Ascending aorta (tissue), 2 donors: ENCODE measurements at regions of chr3 and their contacts with region 1.

Region 1: GRCh38 chr3:121545574-121546455 is at the start of gene POLQ:
- DNase-seq: peak; percentile 65 to 93
- H3K4me3 ChIP-seq: peak within 1 kb of the TSS; percentile 55 to 66
- H3K27ac ChIP-seq: peak within 1 kb of the TSS; percentile 43 to 58
- H3K4me1 ChIP-seq: peaks cover 3 to 5% of the 10 kb centered on the region in 2 donors
- H3K27me3 ChIP-seq: no peaks in the 10 kb centered on the region
- CTCF ChIP-seq: no peak
- total RNA-seq, gene POLQ: not detected

Region 2: GRCh38 chr3:121648219-121648958 is 102.6 kb after region 1 on chr3:
- intact Hi-C with region 1: loop called (anchors 5 kb)
- DNase-seq: no peak
- H3K4me3 ChIP-seq: no peak overlapping the region
- H3K27ac ChIP-seq: peak overlapping the region in 1 of 2 donors; percentile 34
- H3K4me1 ChIP-seq: peaks cover 0 to 6% of the 10 kb centered on the region in 2 donors
- H3K27me3 ChIP-seq: no peaks in the 10 kb centered on the region
- CTCF ChIP-seq: no peak

Region 3: DNA sequence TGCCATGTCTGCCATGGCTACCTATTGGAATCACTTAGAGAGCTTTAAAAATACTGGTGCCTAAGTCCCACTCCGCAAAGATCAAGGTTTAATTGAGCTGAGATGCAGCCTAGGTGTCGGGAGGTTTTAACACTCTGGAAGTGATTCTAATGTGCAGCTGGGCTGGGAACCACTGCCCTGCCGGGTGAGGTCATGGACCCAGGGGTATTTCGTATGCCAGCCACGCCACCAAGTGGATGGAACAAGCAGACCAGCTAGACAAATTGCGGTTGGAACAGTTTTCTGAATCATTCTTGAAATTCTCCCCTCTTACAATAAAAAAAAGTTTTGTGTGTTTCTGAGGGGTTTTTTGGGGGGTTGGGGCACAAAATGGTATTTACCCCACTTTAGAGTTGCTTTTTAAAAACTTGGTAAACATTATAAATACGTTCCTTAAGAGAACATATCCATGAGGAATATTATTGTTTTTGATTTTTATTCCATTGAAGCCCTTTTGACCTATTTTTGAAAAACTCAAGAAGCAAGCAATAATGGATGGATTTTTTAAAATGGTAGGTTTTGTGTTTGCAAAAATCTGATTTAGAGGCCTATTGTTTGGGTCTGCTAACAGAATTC is 713.0 kb after region 1 on chr3:
- intact Hi-C with region 1: loop called (anchors 2 kb)
- DNase-seq: peak in 1 of 2 donors; percentile 10
- H3K4me3 ChIP-seq: no peak overlapping the region
- H3K27ac ChIP-seq: no peak overlapping the region
- H3K4me1 ChIP-seq: no peaks in the 10 kb centered on the region
- H3K27me3 ChIP-seq: no peaks in the 10 kb centered on the region
- CTCF ChIP-seq: peak in 2 of 3 experiments; percentile 13 to 50

Region 4: GRCh38 chr3:122383771-122384697 is 838.2 kb after region 1 on chr3 and contains the start of gene FAM162A:
- intact Hi-C with region 1: loop called (anchors 10 kb)
- DNase-seq: peak; percentile 68 to 96
- H3K4me3 ChIP-seq: peak within 1 kb of the TSS; percentile 73 to 76
- H3K27ac ChIP-seq: peak within 1 kb of the TSS; percentile 82 to 90
- H3K4me1 ChIP-seq: peaks cover 0 to 6% of the 10 kb centered on the region in 2 donors
- H3K27me3 ChIP-seq: no peaks in the 10 kb centered on the region
- CTCF ChIP-seq: peak; percentile 43 to 61 (median 48)
- total RNA-seq, gene FAM162A: 17.1 TPM